ENCODE measurements at regions of chrX and their contacts with region 1.

Region 1: DNA sequence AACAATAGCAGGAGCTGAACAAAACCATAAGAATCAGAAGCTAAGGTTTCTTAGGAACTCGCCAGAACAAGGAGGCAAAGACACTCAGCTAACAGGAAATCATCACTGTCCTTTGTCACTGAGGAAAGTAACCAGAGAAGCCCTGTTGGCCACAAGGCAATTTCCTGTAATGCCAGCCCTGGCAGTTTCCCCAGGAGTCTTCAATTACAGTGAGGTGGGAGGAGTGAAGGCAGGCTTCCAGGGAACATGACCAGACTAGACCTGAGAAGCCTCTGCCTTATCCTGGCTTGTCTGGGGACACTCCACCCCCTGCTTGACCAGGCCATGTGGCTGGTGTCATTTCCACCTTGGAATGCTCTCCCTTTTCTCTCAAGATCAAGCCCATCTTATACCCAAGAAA is 125.3 kb downstream of the COL4A6 start:
- DNase-seq: no peak
- H3K4me3 ChIP-seq: no peak overlapping the region
- H3K27ac ChIP-seq: no peak overlapping the region
- H3K4me1 ChIP-seq: no peaks in the 10 kb centered on the region
- H3K27me3 ChIP-seq: no peaks in the 10 kb centered on the region
- CTCF ChIP-seq: no peak
- EP300 ChIP-seq: no peak
- POLR2A ChIP-seq: no peak

Region 2: DNA sequence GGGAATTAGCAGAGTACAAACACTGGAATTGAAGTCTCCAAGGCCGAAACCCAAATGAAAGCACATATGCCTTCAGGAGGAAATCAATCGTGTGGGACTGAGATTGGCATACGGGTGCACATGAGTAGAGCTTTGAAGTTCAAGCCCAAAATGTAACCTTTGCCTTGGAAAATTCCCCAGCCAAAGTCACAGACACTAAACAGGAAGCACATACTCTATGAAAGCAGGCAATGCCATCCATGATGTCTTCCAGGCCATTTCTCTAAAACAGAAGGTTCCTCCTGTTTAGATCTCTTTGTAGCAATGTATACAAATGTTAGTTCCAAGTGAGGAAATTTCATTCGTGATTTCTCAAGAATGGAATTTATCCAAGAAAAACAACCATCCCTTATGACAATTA is 37.2 kb before region 1 on chrX:
- in situ Hi-C with region 1: no loop called
- intact Hi-C with region 1: loop called (anchors 2 kb)
- DNase-seq: no peak
- H3K4me3 ChIP-seq: no peak overlapping the region
- H3K27ac ChIP-seq: no peak overlapping the region
- H3K4me1 ChIP-seq: no peaks in the 10 kb centered on the region
- H3K27me3 ChIP-seq: no peaks in the 10 kb centered on the region
- CTCF ChIP-seq: no peak
- EP300 ChIP-seq: no peak
- POLR2A ChIP-seq: no peak

Region 3: GRCh38 chrX:108362026-108362425 is 49.1 kb after region 1 on chrX:
- in situ Hi-C with region 1: no loop called
- intact Hi-C with region 1: no loop called
- DNase-seq: no peak
- H3K4me3 ChIP-seq: no peak overlapping the region
- H3K27ac ChIP-seq: no peak overlapping the region
- H3K4me1 ChIP-seq: no peaks in the 10 kb centered on the region
- H3K27me3 ChIP-seq: no peaks in the 10 kb centered on the region
- CTCF ChIP-seq: no peak
- EP300 ChIP-seq: no peak
- POLR2A ChIP-seq: no peak

Measured in transverse colon (tissue), 4 donors.